Heart right ventricle (tissue), 16 donors: ENCODE measurements at regions of chr12 and their contacts with region 1.

Region 1: DNA sequence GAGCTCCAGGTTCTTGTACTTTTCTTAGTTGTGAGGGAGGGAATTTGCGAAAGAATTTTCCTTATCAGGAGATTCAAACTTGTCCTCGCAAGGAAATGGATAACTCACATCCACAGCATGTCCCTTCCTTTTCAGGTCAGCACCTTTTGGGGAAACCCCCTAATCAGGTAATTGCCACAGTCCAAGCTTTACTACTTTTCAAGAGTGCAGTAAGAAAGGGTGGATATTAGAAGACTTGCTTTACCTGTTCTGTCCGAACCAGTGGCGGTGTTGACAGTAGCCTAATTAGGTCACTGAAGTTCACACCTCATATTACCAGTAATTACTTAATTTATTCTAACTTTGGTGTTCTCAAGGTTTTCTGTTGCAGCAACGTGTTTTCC is 6.7 kb upstream of the C12orf50 start:
- DNase-seq: no peak
- ATAC-seq: peak in 4 of 8 donors; percentile 3 to 25 (median 14)
- H3K4me3 ChIP-seq: peak overlapping the region; percentile 58 to 97 (median 80)
- H3K27ac ChIP-seq: peak overlapping the region in 9 of 10 donors; percentile 42 to 83 (median 75)
- H3K4me1 ChIP-seq: peaks cover 0 to 39% (median 22%) of the 10 kb centered on the region in 9 donors
- H3K27me3 ChIP-seq: no peaks in the 10 kb centered on the region
- CTCF ChIP-seq: no peak

Region 2: GRCh38 chr12:88056571-88056970 is 20.7 kb after region 1 on chr12:
- intact Hi-C with region 1: loop called in 1 of 10 experiments (anchors 1 kb)
- DNase-seq: no peak
- ATAC-seq: no peak
- H3K4me3 ChIP-seq: no peak overlapping the region
- H3K27ac ChIP-seq: no peak overlapping the region
- H3K4me1 ChIP-seq: peaks cover 0 to 13% (median 0%) of the 10 kb centered on the region in 9 donors
- H3K27me3 ChIP-seq: no peaks in the 10 kb centered on the region
- CTCF ChIP-seq: no peak